ENCODE measurements at regions of chr1 and their contacts with region 1.

Region 1: DNA sequence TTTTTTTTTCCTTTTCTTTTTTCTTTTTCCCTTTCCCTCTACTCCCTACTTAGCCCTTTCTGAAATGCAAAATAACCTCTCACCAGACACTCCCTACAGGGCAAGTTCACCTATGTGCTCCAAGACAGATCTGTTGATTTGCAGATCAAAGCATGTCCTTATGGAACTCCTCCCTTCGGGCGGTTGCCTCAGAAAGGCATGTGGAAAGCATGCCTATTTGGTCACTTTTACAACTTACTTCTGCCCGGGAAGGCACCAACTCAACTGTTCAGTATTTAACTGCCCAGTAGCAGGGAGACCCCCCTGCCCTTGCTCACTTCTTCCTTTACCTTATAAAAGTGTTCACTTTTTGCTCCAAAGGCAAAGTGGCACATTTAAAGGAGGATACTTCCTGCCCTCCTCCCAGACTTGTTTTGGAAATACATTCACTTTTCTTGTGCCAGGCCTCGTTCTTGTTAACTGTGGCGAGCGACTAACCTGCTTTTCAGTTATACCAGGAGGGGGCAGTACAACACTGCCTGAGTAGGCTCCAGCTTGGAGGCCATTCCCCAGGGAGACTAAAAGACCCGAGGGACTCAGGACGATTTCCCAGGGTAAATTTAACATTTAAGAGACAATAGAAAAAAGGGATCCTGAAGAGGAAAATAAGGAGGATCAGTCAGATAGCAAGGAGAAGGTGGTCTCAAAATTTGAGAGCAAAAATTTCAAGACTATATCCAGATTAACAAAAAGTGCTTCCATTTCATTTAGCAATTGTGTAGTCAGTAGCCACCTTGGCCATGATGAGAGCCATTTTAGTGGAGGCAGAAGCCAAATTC is 12.3 kb upstream of the SLAMF7 start:
- DNase-seq: peak; percentile 78
- H3K4me3 Mint-ChIP-seq: no peak overlapping the region
- H3K27ac Mint-ChIP-seq: no peak overlapping the region
- H3K4me1 Mint-ChIP-seq: no peaks in the 10 kb centered on the region
- H3K27me3 Mint-ChIP-seq: peaks cover 16% of the 10 kb centered on the region
- CTCF ChIP-seq: peak; percentile 91

Region 2: GRCh38 chr1:160711602-160712311 is 14.9 kb before region 1 on chr1 and contains the start of gene CD48:
- CTCF ChIA-PET with region 1: no interaction called
- intact Hi-C with region 1: no loop called
- DNase-seq: no peak
- H3K4me3 Mint-ChIP-seq: no peak within 1 kb of the TSS
- H3K27ac Mint-ChIP-seq: no peak within 1 kb of the TSS
- H3K4me1 Mint-ChIP-seq: no peaks in the 10 kb centered on the region
- H3K27me3 Mint-ChIP-seq: peaks cover 25% of the 10 kb centered on the region
- CTCF ChIP-seq: no peak
- total RNA-seq, gene CD48: not detected in 2 replicates

Region 3: GRCh38 chr1:160768295-160768657 is 41.6 kb after region 1 on chr1:
- CTCF ChIA-PET with region 1: interaction called, 11 read pairs
- intact Hi-C with region 1: loop called (anchors 1 kb)
- DNase-seq: peak; percentile 68
- H3K4me3 Mint-ChIP-seq: no peak overlapping the region
- H3K27ac Mint-ChIP-seq: no peak overlapping the region
- H3K4me1 Mint-ChIP-seq: peaks cover 8% of the 10 kb centered on the region
- H3K27me3 Mint-ChIP-seq: peaks cover 27% of the 10 kb centered on the region
- CTCF ChIP-seq: peak; percentile 57

Region 4: GRCh38 chr1:160951443-160952128 is 224.9 kb after region 1 on chr1:
- CTCF ChIA-PET with region 1: interaction called, 18 read pairs
- intact Hi-C with region 1: loop called (anchors 1 kb)
- DNase-seq: peak; percentile 79
- H3K4me3 Mint-ChIP-seq: no peak overlapping the region
- H3K27ac Mint-ChIP-seq: no peak overlapping the region
- H3K4me1 Mint-ChIP-seq: peaks cover 64% of the 10 kb centered on the region
- H3K27me3 Mint-ChIP-seq: peaks cover 22% of the 10 kb centered on the region
- CTCF ChIP-seq: peak; percentile 88

Region 5: DNA sequence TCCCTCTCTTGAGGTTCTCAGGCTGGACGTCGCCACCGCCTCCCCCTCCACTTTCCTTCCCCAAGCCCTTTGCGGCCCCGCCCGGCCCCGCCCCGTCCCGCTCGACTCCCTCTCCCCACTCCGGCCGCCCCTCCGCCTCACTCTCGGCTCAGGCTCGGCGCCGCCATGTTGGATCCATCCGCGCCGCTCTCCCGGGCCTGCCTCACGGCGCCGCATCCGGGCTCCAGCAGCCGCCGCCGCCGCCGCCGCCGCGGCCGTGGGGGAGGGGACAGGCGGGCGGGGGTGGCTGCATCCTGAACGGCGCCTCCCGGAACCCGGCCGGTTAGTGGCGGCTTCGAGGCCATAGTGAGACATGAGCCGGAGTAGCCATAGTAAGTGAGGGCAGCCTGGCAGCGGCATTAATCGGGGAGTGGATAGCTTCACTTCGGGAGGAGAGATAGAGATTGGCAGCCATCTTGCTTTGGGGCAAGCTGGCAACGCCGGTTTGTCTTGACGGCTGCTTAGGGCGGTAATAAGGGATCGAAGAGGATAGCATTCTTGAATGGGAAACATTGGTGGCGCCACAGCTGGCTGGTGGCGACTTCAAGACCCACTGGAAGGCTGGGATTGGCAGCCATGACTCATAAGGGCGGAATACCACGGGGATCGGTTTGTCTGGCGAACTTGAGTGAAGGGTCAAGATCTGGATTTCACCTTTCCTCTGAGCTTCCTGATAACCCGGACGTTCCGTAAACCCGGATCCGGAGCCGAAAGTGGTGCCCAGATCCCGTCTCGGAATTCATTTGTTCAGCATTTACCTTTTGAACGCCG is 405.9 kb after region 1 on chr1 and contains the start of gene DEDD:
- CTCF ChIA-PET with region 1: no interaction called
- intact Hi-C with region 1: loop called (anchors 10 kb)
- DNase-seq: peak; percentile 94
- H3K4me3 Mint-ChIP-seq: no peak within 1 kb of the TSS
- H3K27ac Mint-ChIP-seq: no peak within 1 kb of the TSS
- H3K4me1 Mint-ChIP-seq: peaks cover 25% of the 10 kb centered on the region
- H3K27me3 Mint-ChIP-seq: no peaks in the 10 kb centered on the region
- CTCF ChIP-seq: no peak
- total RNA-seq, gene DEDD: 40.4 and 45.7 TPM in 2 replicates

Measured in Calu3 (cell line).